ENCODE measurements at regions of chr18 and their contacts with region 1.

Region 1: GRCh38 chr18:13558124-13558523 is 168.2 kb downstream of the FAM210A start:
- DNase-seq: peak; percentile 76
- CTCF ChIP-seq: peak; percentile 72

Region 2: DNA sequence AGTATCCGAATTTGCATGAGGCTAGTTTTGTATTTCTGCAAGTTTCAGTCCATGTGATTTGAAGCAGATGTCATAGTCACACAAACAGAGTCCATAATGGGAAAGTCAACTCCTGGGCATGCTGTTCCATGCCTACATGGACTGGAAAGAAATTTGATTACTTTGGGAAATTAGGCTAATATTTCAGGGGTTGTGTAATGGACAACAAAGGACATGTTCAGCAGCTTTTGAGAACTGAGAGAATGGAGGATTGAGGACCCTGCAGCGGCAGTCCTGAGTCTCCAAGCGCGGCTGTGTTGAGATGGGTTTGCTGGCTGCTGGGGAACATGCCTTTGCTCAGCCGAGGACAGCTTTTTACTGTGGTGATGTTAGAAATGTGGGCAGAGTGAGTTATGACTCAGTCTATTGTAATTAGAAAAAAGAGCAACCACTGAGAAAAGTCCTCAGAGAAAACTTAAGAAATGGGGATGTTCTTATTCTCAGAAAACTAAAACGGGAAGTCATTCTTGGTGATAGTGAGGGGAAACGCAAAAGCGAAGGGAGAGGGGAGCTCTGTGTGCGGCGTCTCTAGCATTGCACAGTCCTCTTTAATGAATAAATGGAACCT is 19.1 kb after region 1 on chr18:
- CTCF ChIA-PET with region 1: interaction called, 24 read pairs
- POLR2A ChIA-PET with region 1: interaction called, 6 read pairs
- DNase-seq: peak; percentile 74
- CTCF ChIP-seq: no peak

Region 3: GRCh38 chr18:13621886-13622619 is 63.9 kb after region 1 on chr18:
- CTCF ChIA-PET with region 1: interaction called, 149 read pairs
- POLR2A ChIA-PET with region 1: no interaction called
- DNase-seq: no peak
- CTCF ChIP-seq: no peak

Region 4: DNA sequence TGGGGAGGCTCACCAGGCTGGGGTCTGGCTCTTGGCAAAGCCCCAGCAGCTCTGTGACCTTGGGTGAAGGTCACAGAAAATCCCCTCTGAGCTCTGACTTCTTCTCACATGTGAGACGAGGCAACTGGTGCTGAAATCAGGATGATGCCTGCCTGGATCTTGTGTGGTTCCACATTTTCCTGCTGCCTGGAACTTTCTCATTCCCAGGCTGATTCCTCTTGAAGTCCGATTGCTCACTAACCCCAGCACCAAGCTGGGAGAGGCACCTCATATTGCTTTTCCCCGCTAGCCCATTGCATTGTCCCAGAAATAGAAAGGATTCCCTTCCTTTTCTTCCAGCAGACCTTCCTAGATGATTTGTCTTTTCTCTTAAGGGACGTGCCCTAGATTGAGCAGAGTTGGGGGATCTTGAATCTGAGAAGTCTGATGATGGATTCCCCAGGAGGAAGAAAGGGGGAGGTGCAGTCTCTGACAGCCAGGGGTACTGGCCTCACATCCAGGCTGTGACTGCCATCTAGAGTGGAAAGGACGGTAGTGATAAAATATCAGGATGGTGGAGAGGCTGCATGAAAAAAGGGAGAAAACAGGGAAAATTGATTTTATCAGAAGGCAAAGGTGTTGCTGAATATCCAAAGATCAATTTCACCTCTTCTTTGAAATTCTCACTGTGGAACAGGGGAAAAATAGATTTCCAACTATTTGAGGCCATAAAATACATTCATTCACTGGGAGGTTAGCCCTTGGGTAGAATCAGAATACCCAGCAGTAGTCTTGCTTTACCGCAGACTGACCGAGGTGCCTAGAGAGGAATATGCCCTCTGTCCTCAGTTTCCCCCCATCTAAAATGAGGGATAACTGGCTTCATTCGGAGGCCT is 72.0 kb after region 1 on chr18:
- CTCF ChIA-PET with region 1: interaction called, 149 read pairs
- POLR2A ChIA-PET with region 1: no interaction called
- DNase-seq: peak; percentile 82
- CTCF ChIP-seq: peak; percentile 63

Region 5: GRCh38 chr18:13688191-13689136 is 130.3 kb after region 1 on chr18:
- CTCF ChIA-PET with region 1: no interaction called
- POLR2A ChIA-PET with region 1: no interaction called
- DNase-seq: no peak
- CTCF ChIP-seq: no peak

Region 6: DNA sequence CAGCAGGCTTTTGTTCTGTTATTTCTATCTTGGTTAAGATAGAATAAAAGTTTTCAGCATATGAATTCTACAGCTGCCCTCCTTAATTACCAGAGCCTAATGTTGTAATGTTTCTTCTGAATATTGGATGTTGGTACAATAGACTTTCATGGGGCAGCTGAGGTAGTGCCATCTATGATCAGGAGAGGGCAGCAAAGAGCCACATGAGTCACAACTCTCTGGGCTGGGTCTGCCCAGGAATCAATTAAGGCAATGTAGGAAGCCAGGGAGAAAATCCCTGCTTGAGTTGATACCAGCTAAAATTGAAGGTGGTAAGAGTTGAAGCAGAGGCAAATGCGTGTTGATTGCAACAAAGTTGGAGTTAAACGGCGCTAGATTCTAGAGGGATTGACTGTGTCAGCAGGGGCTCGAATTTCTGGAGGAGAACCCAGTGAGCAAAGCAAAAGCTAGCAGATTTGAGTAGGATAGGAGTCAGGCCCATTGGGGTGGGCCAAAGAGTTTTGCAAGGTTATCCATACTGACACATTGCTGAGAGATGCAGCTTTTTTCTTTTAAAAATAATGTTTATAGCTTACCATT is 255.2 kb after region 1 on chr18:
- CTCF ChIA-PET with region 1: interaction called, 10 read pairs
- POLR2A ChIA-PET with region 1: no interaction called
- DNase-seq: peak; percentile 73
- CTCF ChIP-seq: peak; percentile 86

Measured in GM10248 (cell line).